IMR-90 (cell line): ENCODE measurements at regions of chr17 and their contacts with region 1.

Region 1: GRCh38 chr17:29753845-29754439 is 131.2 kb upstream of the CORO6 start:
- DNase-seq: no peak
- ATAC-seq: no peak
- H3K4me3 ChIP-seq: no peak overlapping the region
- H3K27ac ChIP-seq: no peak overlapping the region
- H3K4me1 ChIP-seq: no peaks in the 10 kb centered on the region
- H3K27me3 ChIP-seq: no peaks in the 10 kb centered on the region
- CTCF ChIP-seq: no peak
- POLR2A ChIP-seq: no peak
- RAD21 ChIP-seq: no peak

Region 2: DNA sequence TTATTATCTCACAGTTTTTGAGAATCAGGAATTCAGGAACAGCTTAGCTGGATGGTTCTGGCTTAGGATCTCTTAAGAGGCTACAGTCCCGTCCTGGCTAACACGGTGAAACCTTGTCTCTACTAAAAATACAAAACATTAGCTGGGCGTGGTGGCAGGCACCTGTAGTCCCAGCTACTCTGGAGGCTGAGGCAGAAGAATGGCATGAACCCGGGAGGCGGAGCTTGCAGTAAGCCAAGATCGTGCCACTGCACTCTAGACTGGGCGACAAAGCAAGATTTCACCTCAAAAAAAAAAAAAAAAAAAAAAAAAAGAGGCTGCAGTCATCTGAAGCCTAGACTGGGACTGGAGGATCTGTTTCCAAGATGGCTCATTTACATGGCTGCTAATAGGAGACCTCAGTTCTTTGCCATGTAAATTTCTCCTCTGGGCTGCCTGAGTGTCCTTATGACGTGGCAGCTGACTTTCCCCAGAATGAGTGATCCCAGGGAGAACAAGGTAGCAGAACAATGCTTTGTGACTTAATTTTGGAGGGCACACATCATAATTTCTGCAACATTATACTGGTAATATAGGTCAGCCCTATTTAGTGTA is 35.4 kb before region 1 on chr17:
- CTCF ChIA-PET with region 1: no interaction called
- POLR2A ChIA-PET with region 1: no interaction called
- dilution Hi-C with region 1: no loop called
- in situ Hi-C with region 1: no loop called
- intact Hi-C with region 1: loop called (anchors 5 kb)
- DNase-seq: no peak
- ATAC-seq: no peak
- H3K4me3 ChIP-seq: no peak overlapping the region
- H3K27ac ChIP-seq: no peak overlapping the region
- H3K4me1 ChIP-seq: peaks cover 2% of the 10 kb centered on the region; the same call in 1 of the 2 replicates
- H3K27me3 ChIP-seq: no peaks in the 10 kb centered on the region
- CTCF ChIP-seq: no peak
- POLR2A ChIP-seq: no peak
- RAD21 ChIP-seq: no peak

Region 3: GRCh38 chr17:29789196-29790170 is 35.5 kb after region 1 on chr17:
- CTCF ChIA-PET with region 1: no interaction called
- POLR2A ChIA-PET with region 1: no interaction called
- dilution Hi-C with region 1: no loop called
- in situ Hi-C with region 1: no loop called
- intact Hi-C with region 1: no loop called
- DNase-seq: no peak
- ATAC-seq: no peak
- H3K4me3 ChIP-seq: no peak overlapping the region
- H3K27ac ChIP-seq: no peak overlapping the region; the same call in 1 of the 2 replicates
- H3K4me1 ChIP-seq: peaks cover 2% of the 10 kb centered on the region; the same call in 1 of the 2 replicates
- H3K27me3 ChIP-seq: no peaks in the 10 kb centered on the region
- CTCF ChIP-seq: no peak
- POLR2A ChIP-seq: no peak
- RAD21 ChIP-seq: no peak